Activated B cell treated with CpG ODN at 0.5 μM for 24 hours (primary cell): ENCODE measurements at regions of chr11 and their contacts with region 1.

Region 1: DNA sequence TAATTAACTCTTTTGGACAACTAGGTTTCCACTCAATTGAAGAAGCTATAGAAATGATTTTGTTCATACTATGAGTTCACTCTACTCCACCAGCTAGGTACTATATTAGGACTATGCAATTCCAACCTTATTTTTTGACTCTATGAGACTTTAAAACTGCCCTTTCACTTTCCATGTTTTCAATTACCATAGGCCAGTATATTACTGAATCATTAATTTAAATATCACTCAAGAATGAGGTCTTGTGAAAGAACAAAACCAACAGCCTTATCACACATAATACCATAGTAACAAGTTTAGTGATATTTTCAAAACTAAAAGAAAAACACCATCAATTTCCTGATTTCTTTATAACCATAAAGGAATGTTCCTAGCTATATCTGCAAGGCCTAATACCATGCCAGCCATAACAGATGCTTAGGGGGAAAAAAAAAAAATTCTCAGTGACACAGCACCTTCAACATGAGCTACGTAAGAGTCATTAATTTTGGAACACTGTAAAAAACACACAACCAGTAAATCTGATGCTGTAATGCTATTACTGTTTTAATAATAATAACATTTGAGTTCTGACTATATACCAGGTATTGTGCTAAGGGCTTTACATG is 6.1 kb downstream of the DCUN1D5 start:
- DNase-seq: no peak
- ATAC-seq: no peak
- H3K4me3 Mint-ChIP-seq: no peak overlapping the region
- H3K27ac Mint-ChIP-seq: no peak overlapping the region
- H3K4me1 Mint-ChIP-seq: peaks cover 14% of the 10 kb centered on the region
- H3K27me3 Mint-ChIP-seq: no peaks in the 10 kb centered on the region
- CTCF ChIP-seq: no peak

Region 2: GRCh38 chr11:103070142-103070541 is 15.7 kb before region 1 on chr11:
- CTCF ChIA-PET with region 1: no interaction called
- POLR2A ChIA-PET with region 1: no interaction called
- intact Hi-C with region 1: loop called (anchors 2 kb)
- DNase-seq: no peak
- ATAC-seq: peak; percentile 57
- H3K4me3 Mint-ChIP-seq: peak overlapping the region; percentile 20
- H3K27ac Mint-ChIP-seq: peak overlapping the region; percentile 62
- H3K4me1 Mint-ChIP-seq: peaks cover 38% of the 10 kb centered on the region
- H3K27me3 Mint-ChIP-seq: no peaks in the 10 kb centered on the region
- CTCF ChIP-seq: no peak